ENCODE measurements at regions of chr9 and their contacts with region 1.

Region 1: DNA sequence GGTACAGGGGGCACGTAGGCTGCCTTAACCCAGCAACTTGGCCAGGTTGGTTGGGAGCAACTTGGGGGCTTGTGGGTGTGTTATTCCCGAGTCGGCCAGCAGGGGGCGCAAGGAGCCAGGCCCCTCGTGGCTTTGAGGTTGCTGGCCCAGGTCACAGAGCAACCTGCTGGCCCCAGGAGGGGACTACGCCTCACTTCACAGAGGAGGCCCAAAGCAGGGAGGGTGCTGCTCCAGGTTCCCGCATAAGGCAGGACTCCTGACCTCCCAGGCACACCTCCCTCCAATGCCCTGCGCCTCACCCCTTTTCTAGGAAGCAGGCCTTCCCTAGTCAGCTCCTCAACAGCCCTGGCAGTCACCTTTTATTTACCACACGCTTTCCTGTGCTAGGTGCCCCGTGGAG is 18.1 kb downstream of the KYAT1 start:
- DNase-seq: peak; percentile 92
- ATAC-seq: peak; percentile 94
- H3K4me3 ChIP-seq: no peak overlapping the region
- H3K27ac ChIP-seq: no peak overlapping the region
- H3K4me1 ChIP-seq: peaks cover 16% of the 10 kb centered on the region
- H3K27me3 ChIP-seq: no peaks in the 10 kb centered on the region
- CTCF ChIP-seq: peak; percentile 98

Region 2: GRCh38 chr9:128927731-128928411 is 64.2 kb after region 1 on chr9:
- intact Hi-C with region 1: loop called (anchors 5 kb)
- DNase-seq: no peak
- ATAC-seq: peak; percentile 91
- H3K4me3 ChIP-seq: no peak overlapping the region
- H3K27ac ChIP-seq: no peak overlapping the region
- H3K4me1 ChIP-seq: peaks cover 8% of the 10 kb centered on the region
- H3K27me3 ChIP-seq: no peaks in the 10 kb centered on the region
- CTCF ChIP-seq: peak; percentile 87

Region 3: DNA sequence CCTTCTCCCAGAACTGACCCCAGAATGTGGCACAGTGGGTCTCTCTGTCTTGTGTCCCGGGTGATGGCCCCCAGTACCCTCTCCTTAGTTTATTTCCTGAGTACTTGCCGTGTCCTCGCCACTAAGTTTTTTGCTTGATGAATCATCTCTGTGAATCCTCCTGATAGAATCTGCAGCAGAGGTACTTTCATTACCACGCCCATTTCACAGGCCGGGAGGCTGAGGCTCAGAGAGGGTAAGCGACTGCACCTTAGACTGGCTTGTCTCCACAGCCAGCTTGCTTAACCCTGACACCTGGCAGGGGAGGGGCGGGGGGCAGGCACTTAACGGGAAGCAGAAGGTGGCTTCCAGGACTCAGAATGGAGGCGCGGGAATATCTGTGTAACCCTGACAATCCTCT is 322.3 kb after region 1 on chr9:
- intact Hi-C with region 1: no loop called
- DNase-seq: no peak
- ATAC-seq: no peak
- H3K4me3 ChIP-seq: no peak overlapping the region
- H3K27ac ChIP-seq: no peak overlapping the region
- H3K4me1 ChIP-seq: no peaks in the 10 kb centered on the region
- H3K27me3 ChIP-seq: no peaks in the 10 kb centered on the region
- CTCF ChIP-seq: no peak

Measured in upper lobe of right lung (tissue), 1 donor.